Esophagus squamous epithelium (tissue), 5 donors: ENCODE measurements at regions of chr2 and their contacts with region 1.

Region 1: GRCh38 chr2:1742681-1743395 is 1.5 kb downstream of the PXDN start:
- DNase-seq: no peak
- H3K4me3 ChIP-seq: peak overlapping the region; percentile 28 to 86 (median 60)
- H3K27ac ChIP-seq: peak overlapping the region; percentile 79 to 94 (median 91)
- H3K4me1 ChIP-seq: peaks cover 8 to 57% (median 17%) of the 10 kb centered on the region in 3 donors
- H3K27me3 ChIP-seq: peaks cover 0 to 70% (median 2%) of the 10 kb centered on the region in 4 donors
- CTCF ChIP-seq: peak in 4 of 6 experiments; percentile 39 to 54 (median 46)
- POLR2A ChIP-seq: no peak

Region 2: DNA sequence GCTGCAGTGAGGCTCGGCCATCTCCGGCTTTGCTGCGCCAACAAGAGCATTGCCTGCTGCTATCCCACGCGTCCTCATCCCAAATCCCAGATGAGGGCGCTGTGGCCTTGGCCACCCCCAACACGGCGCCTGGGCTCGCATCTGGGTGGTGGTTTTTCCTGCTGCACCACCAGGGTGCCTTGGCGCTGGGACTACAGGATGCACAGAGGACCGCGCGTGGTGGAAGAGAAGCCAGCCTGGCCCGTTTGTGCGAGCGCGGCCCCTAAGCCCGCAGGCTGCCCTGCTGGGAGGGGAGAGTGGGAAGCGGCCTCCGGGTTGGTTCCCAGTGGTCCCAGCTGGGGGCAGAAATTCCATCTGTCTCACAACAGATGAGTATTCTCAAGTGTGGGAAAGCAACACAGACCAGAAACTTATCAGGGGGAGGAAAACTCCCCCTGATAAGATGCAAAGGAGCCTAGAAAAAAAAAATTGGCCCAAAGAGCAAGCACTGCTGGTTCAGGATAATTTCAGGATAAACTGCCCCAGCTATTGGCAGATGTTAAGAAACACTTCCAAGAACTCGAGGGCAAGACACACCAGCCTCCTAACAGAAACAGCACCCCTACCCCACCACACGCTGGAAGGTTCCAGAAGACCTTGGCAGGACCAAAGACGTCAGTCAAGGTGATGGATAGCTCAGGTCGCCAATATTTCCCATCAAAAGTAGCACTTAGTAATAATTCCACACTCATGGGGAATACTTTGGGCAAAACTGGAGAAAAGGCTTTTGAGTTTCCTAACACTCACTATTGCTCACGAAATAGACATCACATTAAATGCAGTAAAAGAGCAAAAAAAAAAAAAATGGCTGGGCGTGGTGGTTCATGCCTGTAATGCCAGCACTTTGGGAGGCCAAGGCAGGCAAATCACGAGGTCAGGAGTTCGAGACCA is 150.6 kb before region 1 on chr2:
- intact Hi-C with region 1: loop called (anchors 10 kb)
- DNase-seq: no peak
- H3K4me3 ChIP-seq: peak overlapping the region in 1 of 4 donors; percentile 6
- H3K27ac ChIP-seq: peak overlapping the region in 1 of 4 donors; percentile 21
- H3K4me1 ChIP-seq: peaks cover 0 to 30% (median 10%) of the 10 kb centered on the region in 3 donors
- H3K27me3 ChIP-seq: peaks cover 0 to 39% (median 0%) of the 10 kb centered on the region in 4 donors
- CTCF ChIP-seq: peak in 4 of 6 experiments; percentile 50 to 74 (median 57)
- POLR2A ChIP-seq: no peak

Region 3: DNA sequence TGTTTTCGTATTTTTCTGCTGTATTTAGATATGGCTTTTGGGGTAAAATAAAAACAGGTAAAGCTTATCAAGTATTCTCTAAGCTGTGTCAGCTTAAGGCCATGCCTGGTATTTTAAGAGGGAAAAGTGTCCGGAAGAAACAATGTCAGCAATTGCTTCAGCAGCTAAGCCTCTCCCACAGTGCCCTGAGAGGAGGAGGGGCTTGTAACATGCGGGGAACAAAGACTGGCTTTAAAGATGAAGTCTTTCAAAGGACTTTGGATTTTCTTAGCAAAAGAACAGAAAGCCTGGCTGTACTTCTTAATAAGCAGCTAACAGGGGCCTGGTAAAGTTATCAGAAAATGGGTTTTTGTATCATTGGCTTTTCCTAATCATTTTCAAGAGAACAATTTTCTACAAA is 101.3 kb before region 1 on chr2:
- intact Hi-C with region 1: no loop called
- DNase-seq: no peak
- H3K4me3 ChIP-seq: no peak overlapping the region
- H3K27ac ChIP-seq: no peak overlapping the region
- H3K4me1 ChIP-seq: no peaks in the 10 kb centered on the region
- H3K27me3 ChIP-seq: no peaks in the 10 kb centered on the region
- CTCF ChIP-seq: no peak
- POLR2A ChIP-seq: no peak

Region 4: GRCh38 chr2:1868683-1869141 is 125.9 kb after region 1 on chr2:
- intact Hi-C with region 1: no loop called
- DNase-seq: no peak
- H3K4me3 ChIP-seq: no peak overlapping the region
- H3K27ac ChIP-seq: no peak overlapping the region
- H3K4me1 ChIP-seq: peaks cover 0 to 7% (median 0%) of the 10 kb centered on the region in 3 donors
- H3K27me3 ChIP-seq: peaks cover 0 to 84% (median 2%) of the 10 kb centered on the region in 4 donors
- CTCF ChIP-seq: no peak
- POLR2A ChIP-seq: no peak